ENCODE measurements at regions of chr19 and their contacts with region 1.

Region 1: DNA sequence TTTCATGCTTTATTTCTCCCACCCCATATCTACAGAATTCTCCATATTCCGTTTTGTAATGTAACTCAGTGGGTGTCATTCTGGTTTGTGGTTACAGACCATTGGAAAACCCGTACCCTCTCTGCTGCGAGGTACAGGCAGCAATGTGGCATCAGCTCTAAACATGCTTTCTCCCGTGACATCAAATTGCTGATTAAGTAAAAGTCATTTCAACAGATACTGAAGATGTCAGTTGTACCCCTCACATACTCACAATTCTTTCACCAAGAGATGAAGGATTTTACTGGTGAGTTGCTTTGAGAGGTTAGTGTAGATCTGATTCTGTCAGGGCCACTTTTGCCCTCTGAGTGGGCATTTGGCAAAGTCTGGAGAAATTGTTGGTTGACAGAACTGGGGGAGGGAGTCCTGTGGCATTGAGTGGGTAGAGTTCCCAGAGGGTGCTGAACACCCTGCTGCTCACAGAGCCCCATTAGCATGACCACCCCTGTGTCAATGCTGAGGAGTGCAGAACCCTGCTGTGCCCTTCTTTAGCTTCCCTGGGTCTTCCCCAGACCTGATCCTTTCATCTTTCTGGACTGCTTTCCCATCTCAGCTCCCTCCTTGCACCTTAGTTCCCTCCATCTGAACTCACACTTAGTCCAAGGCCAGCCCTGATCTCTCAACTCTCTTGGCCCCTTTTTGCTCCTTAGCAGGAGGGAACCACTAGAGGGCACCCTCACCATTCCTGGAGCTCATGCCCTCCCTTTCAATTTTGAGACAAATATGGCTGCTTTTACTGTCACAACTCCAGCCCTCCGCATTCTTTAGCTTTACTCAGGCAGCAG is 39.9 kb upstream of the CEACAM8 start:
- DNase-seq: no peak
- H3K4me3 ChIP-seq: no peak overlapping the region
- H3K27ac ChIP-seq: no peak overlapping the region
- H3K27me3 ChIP-seq: no peaks in the 10 kb centered on the region
- CTCF ChIP-seq: peak; percentile 75

Region 2: GRCh38 chr19:42652021-42652420 is 17.4 kb after region 1 on chr19:
- CTCF ChIA-PET with region 1: interaction called, 12 read pairs
- POLR2A ChIA-PET with region 1: no interaction called
- DNase-seq: no peak
- H3K4me3 ChIP-seq: no peak overlapping the region
- H3K27ac ChIP-seq: no peak overlapping the region
- H3K27me3 ChIP-seq: peaks cover 11% of the 10 kb centered on the region
- CTCF ChIP-seq: no peak